ENCODE measurements at regions of chr2 and their contacts with region 1.

Region 1: DNA sequence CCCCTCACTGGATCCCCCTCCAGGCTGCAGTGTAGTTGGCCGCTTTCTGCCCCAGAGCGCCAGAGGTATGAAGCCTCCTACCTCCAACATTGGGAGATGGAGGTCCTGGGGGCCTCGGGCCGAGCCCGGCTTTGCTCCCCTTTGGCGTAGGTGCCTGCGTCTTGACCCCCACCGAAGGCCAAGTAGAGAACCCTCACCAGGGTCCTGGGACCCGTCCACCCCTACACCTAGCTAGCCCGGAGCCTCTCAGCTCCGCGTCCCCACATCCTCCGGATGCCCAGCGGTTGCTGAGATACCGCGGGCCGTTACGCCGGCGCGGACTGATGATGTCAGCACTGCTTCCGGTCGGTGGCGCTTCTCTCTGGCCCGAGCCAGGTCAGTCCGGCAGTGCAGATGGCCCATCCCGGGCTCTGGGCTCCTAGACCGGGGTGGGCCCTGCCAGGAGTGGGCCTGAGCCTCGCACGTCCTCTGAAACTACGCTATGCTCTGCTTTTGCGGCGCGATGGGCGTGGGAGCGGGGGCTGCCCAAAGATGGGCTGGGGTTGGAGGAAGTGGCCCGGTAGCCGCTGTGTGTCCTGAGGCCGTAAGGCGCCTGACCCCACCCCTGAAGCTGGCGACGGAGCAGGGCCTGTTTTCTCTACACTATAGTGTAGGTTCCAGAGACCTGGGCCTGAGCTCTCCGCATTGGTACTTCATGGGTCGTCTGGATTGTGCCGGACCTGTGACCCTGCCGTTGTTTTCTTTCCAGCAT is at the starts of genes GLB1L and STK16:
- DNase-seq: peak; percentile 87
- H3K4me3 Mint-ChIP-seq: peak within 1 kb of the TSS; percentile 80
- H3K27ac Mint-ChIP-seq: peak within 1 kb of the TSS; percentile 85
- H3K4me1 Mint-ChIP-seq: peaks cover 21% of the 10 kb centered on the region
- H3K27me3 Mint-ChIP-seq: no peaks in the 10 kb centered on the region
- CTCF ChIP-seq: no peak
- total RNA-seq, gene GLB1L: 4.9 and 7.5 TPM in 2 replicates
- total RNA-seq, gene STK16: 33.4 and 42.7 TPM in 2 replicates

Region 2: GRCh38 chr2:219206442-219207253 is 38.7 kb before region 1 on chr2 and contains the start of gene ZFAND2B:
- CTCF ChIA-PET with region 1: interaction called, 4 read pairs
- POLR2A ChIA-PET with region 1: interaction called, 11 read pairs
- intact Hi-C with region 1: no loop called
- DNase-seq: peak; percentile 93
- H3K4me3 Mint-ChIP-seq: peak within 1 kb of the TSS; percentile 88
- H3K27ac Mint-ChIP-seq: peak within 1 kb of the TSS; percentile 94
- H3K4me1 Mint-ChIP-seq: peaks cover 15% of the 10 kb centered on the region
- H3K27me3 Mint-ChIP-seq: no peaks in the 10 kb centered on the region
- CTCF ChIP-seq: no peak
- total RNA-seq, gene ZFAND2B: 61.0 and 73.1 TPM in 2 replicates

Region 3: GRCh38 chr2:219229305-219230058 is 15.8 kb before region 1 on chr2 and contains the starts of genes ANKZF1 and ATG9A:
- CTCF ChIA-PET with region 1: interaction called, 9 read pairs
- POLR2A ChIA-PET with region 1: interaction called, 401 read pairs
- intact Hi-C with region 1: loop called (anchors 2 kb)
- DNase-seq: peak; percentile 100
- H3K4me3 Mint-ChIP-seq: peak within 1 kb of the TSS; percentile 100
- H3K27ac Mint-ChIP-seq: peak within 1 kb of the TSS; percentile 99
- H3K4me1 Mint-ChIP-seq: peaks cover 12% of the 10 kb centered on the region
- H3K27me3 Mint-ChIP-seq: no peaks in the 10 kb centered on the region
- CTCF ChIP-seq: no peak
- total RNA-seq, gene ANKZF1: 45.5 and 45.6 TPM in 2 replicates
- total RNA-seq, gene ATG9A: 52.1 and 60.8 TPM in 2 replicates

Region 4: GRCh38 chr2:219278655-219279516 is 33.6 kb after region 1 on chr2 and contains the start of gene DNAJB2:
- CTCF ChIA-PET with region 1: interaction called, 42 read pairs
- POLR2A ChIA-PET with region 1: interaction called, 263 read pairs
- intact Hi-C with region 1: no loop called
- DNase-seq: peak; percentile 97
- H3K4me3 Mint-ChIP-seq: peak within 1 kb of the TSS; percentile 86
- H3K27ac Mint-ChIP-seq: peak within 1 kb of the TSS; percentile 86
- H3K4me1 Mint-ChIP-seq: peaks cover 42% of the 10 kb centered on the region
- H3K27me3 Mint-ChIP-seq: no peaks in the 10 kb centered on the region
- CTCF ChIP-seq: no peak
- total RNA-seq, gene DNAJB2: 58.2 and 59.8 TPM in 2 replicates